HEK293T (cell line): ENCODE measurements at regions of chr12 and their contacts with region 1.

Region 1: DNA sequence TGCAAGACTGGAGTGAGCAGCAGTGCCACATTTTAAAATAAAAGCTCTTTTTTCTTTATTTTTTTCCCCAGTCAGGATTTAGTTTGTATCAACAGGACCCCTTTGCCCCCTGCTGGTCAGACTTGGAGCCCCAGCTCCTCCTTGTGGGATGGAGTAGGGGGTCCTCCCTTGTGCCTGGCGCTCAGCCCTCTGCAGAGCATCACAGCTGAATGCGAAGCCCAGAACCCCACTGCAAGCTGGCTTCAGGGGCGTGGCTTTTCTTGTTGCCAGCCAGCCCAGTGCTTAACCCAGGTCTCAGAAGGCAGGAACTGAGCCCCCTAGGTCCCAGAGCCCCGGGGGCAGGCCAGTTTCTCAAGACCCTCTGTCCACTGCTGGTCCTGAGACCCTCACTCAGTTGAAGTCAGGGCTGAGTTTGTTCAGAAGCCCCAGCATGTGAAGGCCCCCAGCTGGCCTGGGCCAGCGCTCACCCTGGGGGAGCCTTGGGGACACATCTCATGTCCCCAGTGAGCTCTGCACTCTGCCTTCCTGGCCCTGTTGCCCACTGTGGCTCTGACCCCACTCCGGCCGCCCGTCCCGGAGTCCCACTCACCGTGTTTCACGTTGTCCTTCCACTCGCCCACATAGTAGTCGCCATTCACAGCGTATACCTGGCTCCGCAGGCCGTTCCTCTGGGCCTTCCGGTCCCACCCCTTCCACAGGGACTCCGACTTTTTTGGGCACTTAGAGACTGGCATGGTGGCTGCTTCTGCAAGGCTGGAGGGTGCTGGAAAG is 519 bp downstream of the MORN3 start:
- DNase-seq: no peak

Region 2: DNA sequence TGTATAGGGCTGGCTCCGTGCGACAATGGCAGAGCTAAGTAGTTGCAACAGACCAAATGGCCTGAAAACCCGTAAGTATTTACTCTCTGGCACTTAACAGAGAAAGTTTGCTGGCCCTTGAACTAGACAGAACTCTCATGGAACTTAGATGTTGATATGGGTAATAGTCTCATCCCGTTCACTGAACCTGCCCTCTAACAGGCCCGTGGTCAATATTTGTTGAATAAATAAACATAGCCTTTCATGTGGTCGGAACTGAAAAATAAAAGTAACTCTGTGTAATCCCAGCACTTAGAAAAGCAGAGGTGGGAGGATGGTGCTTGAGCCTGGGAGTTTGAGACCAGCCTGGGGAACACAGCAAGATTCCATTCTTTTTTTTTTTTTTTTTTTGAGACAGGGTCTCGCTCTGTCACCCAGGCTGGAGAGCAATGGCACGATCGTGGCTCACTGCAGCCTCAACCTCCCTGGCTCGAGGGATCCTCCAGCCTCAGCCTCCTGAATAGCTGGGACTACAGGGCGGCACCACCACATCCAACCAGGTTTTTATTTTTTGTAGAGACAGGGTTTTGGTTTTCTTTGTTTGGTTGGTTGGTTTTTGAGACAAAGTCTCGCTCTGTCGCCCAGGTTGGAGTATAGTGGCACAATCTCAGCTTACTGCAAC is 117.8 kb before region 1 on chr12:
- CTCF ChIA-PET with region 1: interaction called, 23 read pairs
- POLR2A ChIA-PET with region 1: interaction called, 6 read pairs
- DNase-seq: no peak

Region 3: GRCh38 chr12:121626087-121626852 is 42.7 kb before region 1 on chr12 and contains the start of gene ORAI1:
- CTCF ChIA-PET with region 1: interaction called, 7 read pairs
- POLR2A ChIA-PET with region 1: interaction called, 11 read pairs
- DNase-seq: peak; percentile 95